ENCODE measurements at regions of chr14 and their contacts with region 1.

Region 1: GRCh38 chr14:106665814-106666213 is 1139.4 kb downstream of the TMEM121 start:
- DNase-seq: peak; percentile 10
- ATAC-seq: no peak
- H3K4me3 Mint-ChIP-seq: no peak overlapping the region
- H3K27ac Mint-ChIP-seq: no peak overlapping the region
- H3K4me1 Mint-ChIP-seq: peaks cover 19% of the 10 kb centered on the region
- H3K27me3 Mint-ChIP-seq: peaks cover 5% of the 10 kb centered on the region
- CTCF ChIP-seq: no peak

Region 2: DNA sequence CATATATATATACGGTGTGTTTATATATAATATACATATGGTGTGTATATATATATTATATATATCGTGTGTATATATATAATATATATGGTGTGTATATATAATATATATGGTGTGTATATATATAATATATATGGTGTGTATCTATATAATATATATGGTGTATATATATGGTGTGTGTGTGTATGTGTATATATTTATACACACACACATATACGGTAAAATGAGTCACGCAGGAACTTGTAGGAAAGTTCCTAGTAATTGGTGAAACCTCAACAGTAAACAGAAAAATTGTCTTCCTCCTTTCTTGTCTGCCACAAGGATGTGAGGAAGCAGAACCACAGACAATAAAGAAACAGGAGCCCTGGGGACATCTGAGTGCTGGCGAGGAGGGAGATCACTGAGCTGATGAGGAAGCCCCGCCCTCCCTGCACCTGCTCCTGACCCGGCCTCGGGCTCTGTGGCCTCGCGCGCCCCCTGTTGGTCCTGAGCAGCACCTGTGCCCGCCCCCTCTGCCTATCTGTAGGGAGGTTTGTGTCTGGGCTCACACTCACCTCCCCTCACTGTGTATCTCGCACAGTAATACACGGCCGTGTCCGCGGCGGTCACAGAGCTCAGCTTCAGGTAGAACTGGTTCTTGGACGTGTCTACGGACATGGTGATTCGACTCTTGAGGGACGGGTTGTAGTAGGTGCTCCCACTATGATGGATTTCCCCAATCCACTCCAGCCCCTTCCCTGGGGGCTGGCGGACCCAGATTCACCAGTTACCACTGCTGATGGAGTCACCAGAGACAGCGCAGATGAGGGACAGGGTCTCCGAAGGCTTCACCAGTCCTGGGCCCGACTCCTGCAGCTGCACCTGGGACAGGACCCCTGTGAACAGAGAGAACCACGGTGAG is 60.0 kb before region 1 on chr14:
- CTCF ChIA-PET with region 1: interaction called, 14 read pairs
- POLR2A ChIA-PET with region 1: no interaction called
- intact Hi-C with region 1: no loop called
- DNase-seq: peak; percentile 94
- ATAC-seq: peak; percentile 100
- H3K4me3 Mint-ChIP-seq: no peak overlapping the region
- H3K27ac Mint-ChIP-seq: no peak overlapping the region
- H3K4me1 Mint-ChIP-seq: no peaks in the 10 kb centered on the region
- H3K27me3 Mint-ChIP-seq: peaks cover 20% of the 10 kb centered on the region
- CTCF ChIP-seq: peak; percentile 75

Region 3: GRCh38 chr14:106633721-106634120 is 32.1 kb before region 1 on chr14:
- CTCF ChIA-PET with region 1: interaction called, 19 read pairs
- POLR2A ChIA-PET with region 1: no interaction called
- intact Hi-C with region 1: no loop called
- DNase-seq: no peak
- ATAC-seq: no peak
- H3K4me3 Mint-ChIP-seq: no peak overlapping the region
- H3K27ac Mint-ChIP-seq: no peak overlapping the region
- H3K4me1 Mint-ChIP-seq: peaks cover 1% of the 10 kb centered on the region
- H3K27me3 Mint-ChIP-seq: peaks cover 15% of the 10 kb centered on the region
- CTCF ChIP-seq: no peak

Region 4: DNA sequence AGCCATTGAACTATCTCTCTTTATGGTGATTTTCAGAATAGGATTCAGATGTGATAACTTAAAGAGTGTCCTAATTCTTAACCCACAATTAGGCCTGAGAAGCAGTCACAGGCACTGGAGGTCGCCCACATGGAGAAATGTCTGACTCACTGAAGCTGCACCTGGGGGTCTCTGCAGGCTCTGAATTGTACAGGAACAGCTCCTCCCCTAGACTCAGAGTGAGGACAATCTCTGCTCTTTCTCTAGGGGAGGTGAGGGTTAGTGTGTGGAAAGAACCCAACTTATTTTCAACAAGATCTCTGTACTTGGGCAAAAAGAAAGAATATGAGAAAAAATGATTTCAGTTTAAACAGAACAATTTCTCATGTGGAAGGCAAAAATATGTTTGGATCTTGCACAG is 14.8 kb before region 1 on chr14:
- CTCF ChIA-PET with region 1: interaction called, 25 read pairs
- POLR2A ChIA-PET with region 1: no interaction called
- intact Hi-C with region 1: no loop called
- DNase-seq: no peak
- ATAC-seq: no peak
- H3K4me3 Mint-ChIP-seq: no peak overlapping the region
- H3K27ac Mint-ChIP-seq: no peak overlapping the region
- H3K4me1 Mint-ChIP-seq: peaks cover 2% of the 10 kb centered on the region
- H3K27me3 Mint-ChIP-seq: peaks cover 1% of the 10 kb centered on the region
- CTCF ChIP-seq: no peak

Region 5: GRCh38 chr14:106691601-106692291 is 25.9 kb after region 1 on chr14:
- CTCF ChIA-PET with region 1: interaction called, 28 read pairs
- POLR2A ChIA-PET with region 1: interaction called, 3 read pairs
- intact Hi-C with region 1: no loop called
- DNase-seq: peak; percentile 96
- ATAC-seq: peak; percentile 78
- H3K4me3 Mint-ChIP-seq: no peak overlapping the region
- H3K27ac Mint-ChIP-seq: no peak overlapping the region
- H3K4me1 Mint-ChIP-seq: peaks cover 22% of the 10 kb centered on the region
- H3K27me3 Mint-ChIP-seq: peaks cover 2% of the 10 kb centered on the region
- CTCF ChIP-seq: peak; percentile 81

Region 6: GRCh38 chr14:106831322-106831720 is 165.5 kb after region 1 on chr14:
- CTCF ChIA-PET with region 1: interaction called, 14 read pairs
- POLR2A ChIA-PET with region 1: no interaction called
- intact Hi-C with region 1: no loop called
- DNase-seq: peak; percentile 89
- ATAC-seq: peak; percentile 74
- H3K4me3 Mint-ChIP-seq: no peak overlapping the region
- H3K27ac Mint-ChIP-seq: no peak overlapping the region
- H3K4me1 Mint-ChIP-seq: no peaks in the 10 kb centered on the region
- H3K27me3 Mint-ChIP-seq: peaks cover 3% of the 10 kb centered on the region
- CTCF ChIP-seq: peak; percentile 91